ENCODE measurements at regions of chr3 and their contacts with region 1.

Region 1: DNA sequence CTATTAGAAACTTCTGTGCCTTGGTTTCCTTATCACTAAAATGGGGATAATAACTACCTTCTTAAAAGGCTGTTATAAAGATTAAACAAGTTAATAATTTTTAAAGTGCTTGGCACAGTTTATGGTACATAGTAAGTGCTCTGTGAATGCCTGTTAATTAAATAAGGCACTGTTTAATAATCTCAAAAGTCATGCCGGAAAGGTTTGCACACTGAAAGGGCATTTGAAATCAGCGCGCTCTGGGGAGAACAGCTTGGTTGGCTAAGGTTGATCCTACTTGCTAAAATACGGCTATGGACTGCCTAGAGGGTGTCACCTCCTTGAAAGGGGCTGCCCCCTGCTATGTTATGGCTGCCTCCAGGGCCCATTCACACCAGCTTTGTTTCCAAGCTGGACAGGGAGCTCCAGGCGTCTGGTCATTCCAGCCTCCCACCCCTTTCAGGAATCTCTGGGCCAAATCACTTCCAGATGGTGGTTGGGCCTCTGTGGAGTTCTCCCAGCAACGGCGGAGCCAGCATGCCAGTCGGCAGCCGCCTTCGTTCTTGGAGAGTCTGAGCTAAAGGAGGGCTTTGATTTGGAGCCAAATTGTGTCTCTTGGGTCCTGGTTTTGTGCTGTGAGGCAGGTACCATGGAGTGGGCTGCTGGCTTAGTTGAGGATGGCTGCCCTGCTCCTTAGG is 5.9 kb downstream of the FLNB start:
- DNase-seq: no peak
- ATAC-seq: no peak
- H3K4me3 ChIP-seq: no peak overlapping the region
- H3K27ac ChIP-seq: no peak overlapping the region
- H3K4me1 ChIP-seq: peaks cover 16% of the 10 kb centered on the region
- H3K27me3 ChIP-seq: no peaks in the 10 kb centered on the region
- CTCF ChIP-seq: no peak
- EP300 ChIP-seq: no peak
- POLR2A ChIP-seq: no peak
- RAD21 ChIP-seq: no peak

Region 2: GRCh38 chr3:58025837-58026569 is 11.9 kb after region 1 on chr3:
- CTCF ChIA-PET with region 1: interaction called, 88 read pairs
- POLR2A ChIA-PET with region 1: interaction called, 75 read pairs
- RAD21 ChIA-PET with region 1: interaction called, 110 read pairs
- SMC1A ChIA-PET with region 1: interaction called, 35 read pairs
- in situ Hi-C with region 1: no loop called
- intact Hi-C with region 1: no loop called
- DNase-seq: no peak
- ATAC-seq: no peak
- H3K4me3 ChIP-seq: no peak overlapping the region
- H3K27ac ChIP-seq: no peak overlapping the region
- H3K4me1 ChIP-seq: peaks cover 13% of the 10 kb centered on the region
- H3K27me3 ChIP-seq: no peaks in the 10 kb centered on the region
- CTCF ChIP-seq: no peak
- EP300 ChIP-seq: no peak
- POLR2A ChIP-seq: no peak
- RAD21 ChIP-seq: no peak

Measured in GM12878 (cell line).